ENCODE measurements at regions of chr11 and their contacts with region 1.

Region 1: DNA sequence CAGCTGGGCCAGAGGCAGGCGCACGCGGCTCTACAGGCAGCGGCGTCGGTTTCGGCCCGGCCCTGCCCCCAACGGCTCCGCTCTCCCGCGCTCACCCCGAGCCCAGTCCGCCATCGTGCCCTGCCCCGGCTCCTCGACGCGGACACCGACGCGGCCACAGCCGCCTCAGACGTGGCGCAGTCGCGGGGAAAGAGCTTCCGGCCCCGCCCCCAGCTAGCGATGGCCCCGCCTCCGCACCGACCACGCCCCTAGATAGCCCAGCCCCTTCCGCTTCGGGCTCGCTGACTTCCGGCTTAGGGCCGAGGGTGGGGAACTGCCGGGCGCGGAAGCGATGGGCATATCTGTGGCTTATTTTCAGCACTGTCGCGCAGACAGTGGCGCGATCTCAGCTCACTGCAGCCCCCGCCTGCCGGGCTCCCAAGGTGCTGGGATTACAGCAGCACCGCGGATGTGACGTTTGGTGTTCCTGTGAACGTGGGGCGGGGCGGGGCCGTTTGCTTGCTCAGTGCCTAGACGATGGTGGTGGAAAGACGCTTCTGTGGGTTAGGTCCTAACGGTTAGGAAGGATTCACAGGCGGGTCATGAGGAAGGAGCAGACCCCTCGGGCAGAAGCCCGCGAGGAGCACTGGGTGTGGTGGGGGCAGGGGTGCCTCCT is at the starts of genes BET1L and RIC8A:
- DNase-seq: peak; percentile 99
- H3K4me3 ChIP-seq: peak within 1 kb of the TSS; percentile 93 to 97
- H3K27ac ChIP-seq: peak within 1 kb of the TSS; percentile 96 to 97
- H3K4me1 ChIP-seq: peaks cover 12 to 62% (median 53%) of the 10 kb centered on the region in 4 donors
- H3K27me3 ChIP-seq: no peaks in the 10 kb centered on the region
- CTCF ChIP-seq: peak in 1 of 2 experiments; percentile 20

Region 2: GRCh38 chr11:236774-237767 is 29.7 kb after region 1 on chr11 and contains the start of gene PSMD13:
- intact Hi-C with region 1: loop called (anchors 2 kb)
- DNase-seq: peak; percentile 82 to 90
- H3K4me3 ChIP-seq: peak within 1 kb of the TSS; percentile 98 to 99
- H3K27ac ChIP-seq: peak within 1 kb of the TSS; percentile 95 to 98
- H3K4me1 ChIP-seq: peaks cover 0 to 26% (median 23%) of the 10 kb centered on the region in 4 donors
- H3K27me3 ChIP-seq: no peaks in the 10 kb centered on the region
- CTCF ChIP-seq: peak in 1 of 2 experiments; percentile 32

Region 3: DNA sequence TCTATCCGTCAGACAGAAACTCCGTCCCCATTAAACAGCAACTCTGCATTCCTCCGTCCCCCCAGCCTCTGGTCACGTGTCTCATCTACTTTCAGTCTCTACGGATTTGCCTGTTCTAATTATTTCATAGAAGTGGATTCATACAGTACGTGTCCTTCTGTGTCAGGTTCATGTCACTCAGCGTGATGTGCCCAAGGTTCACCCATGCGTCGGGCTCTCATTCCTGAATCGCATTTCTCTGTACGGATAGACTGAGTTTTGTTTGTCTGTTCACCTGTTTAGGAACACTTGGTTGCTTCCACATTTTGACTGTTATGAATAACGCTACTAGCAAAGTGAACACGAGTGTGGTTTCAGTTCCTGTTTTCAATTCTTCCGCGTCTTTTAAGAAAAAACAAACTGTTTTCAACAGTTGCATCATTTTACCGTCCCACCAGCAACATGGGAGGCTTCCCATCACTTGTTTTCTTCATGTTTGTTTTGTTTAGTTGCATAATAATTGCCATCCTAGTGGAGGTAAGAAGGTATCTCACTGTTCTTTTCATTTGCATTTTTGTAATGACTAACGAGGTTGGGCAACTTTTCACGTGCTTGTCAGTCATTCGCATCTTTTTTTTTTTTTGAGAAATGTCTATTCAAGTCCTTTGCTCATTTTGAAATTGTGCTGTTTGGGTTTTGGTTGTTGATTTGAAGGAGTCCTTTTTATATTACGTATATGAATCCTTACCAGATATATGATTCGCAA is 62.0 kb after region 1 on chr11:
- intact Hi-C with region 1: no loop called
- DNase-seq: peak in 1 of 2 donors; percentile 60
- H3K4me3 ChIP-seq: no peak overlapping the region
- H3K27ac ChIP-seq: no peak overlapping the region
- H3K4me1 ChIP-seq: no peaks in the 10 kb centered on the region
- H3K27me3 ChIP-seq: peaks cover 0 to 38% of the 10 kb centered on the region in 2 donors
- CTCF ChIP-seq: no peak

Region 4: GRCh38 chr11:355581-356458 is 148.5 kb after region 1 on chr11:
- intact Hi-C with region 1: loop called (anchors 5 kb)
- DNase-seq: peak; percentile 92 to 97
- H3K4me3 ChIP-seq: peak overlapping the region; percentile 50 to 56
- H3K27ac ChIP-seq: peak overlapping the region; percentile 94 to 97
- H3K4me1 ChIP-seq: peaks cover 0 to 33% (median 26%) of the 10 kb centered on the region in 4 donors
- H3K27me3 ChIP-seq: peaks cover 0 to 18% of the 10 kb centered on the region in 2 donors
- CTCF ChIP-seq: no peak

Region 5: GRCh38 chr11:396948-397548 is 189.7 kb after region 1 on chr11:
- intact Hi-C with region 1: no loop called
- DNase-seq: no peak
- H3K4me3 ChIP-seq: peak overlapping the region; percentile 40 to 47
- H3K27ac ChIP-seq: no peak overlapping the region
- H3K4me1 ChIP-seq: peaks cover 0 to 44% (median 9%) of the 10 kb centered on the region in 4 donors
- H3K27me3 ChIP-seq: peaks cover 0 to 58% of the 10 kb centered on the region in 2 donors
- CTCF ChIP-seq: peak; percentile 52 to 55

Region 6: GRCh38 chr11:447923-448731 is 240.8 kb after region 1 on chr11:
- intact Hi-C with region 1: loop called (anchors 5 kb)
- DNase-seq: peak; percentile 95 to 96
- H3K4me3 ChIP-seq: peak overlapping the region; percentile 58 to 64
- H3K27ac ChIP-seq: peak overlapping the region; percentile 84 to 89
- H3K4me1 ChIP-seq: peaks cover 0 to 35% (median 29%) of the 10 kb centered on the region in 4 donors
- H3K27me3 ChIP-seq: peaks cover 0 to 24% of the 10 kb centered on the region in 2 donors
- CTCF ChIP-seq: peak; percentile 74 to 75